Left cardiac atrium (tissue), 4 donors: ENCODE measurements at regions of chr2 and their contacts with region 1.

Region 1: GRCh38 chr2:74919827-74920226 is 38.6 kb upstream of the POLE4 start:
- DNase-seq: peak; percentile 60
- ATAC-seq: peak; percentile 55 to 67

Region 2: DNA sequence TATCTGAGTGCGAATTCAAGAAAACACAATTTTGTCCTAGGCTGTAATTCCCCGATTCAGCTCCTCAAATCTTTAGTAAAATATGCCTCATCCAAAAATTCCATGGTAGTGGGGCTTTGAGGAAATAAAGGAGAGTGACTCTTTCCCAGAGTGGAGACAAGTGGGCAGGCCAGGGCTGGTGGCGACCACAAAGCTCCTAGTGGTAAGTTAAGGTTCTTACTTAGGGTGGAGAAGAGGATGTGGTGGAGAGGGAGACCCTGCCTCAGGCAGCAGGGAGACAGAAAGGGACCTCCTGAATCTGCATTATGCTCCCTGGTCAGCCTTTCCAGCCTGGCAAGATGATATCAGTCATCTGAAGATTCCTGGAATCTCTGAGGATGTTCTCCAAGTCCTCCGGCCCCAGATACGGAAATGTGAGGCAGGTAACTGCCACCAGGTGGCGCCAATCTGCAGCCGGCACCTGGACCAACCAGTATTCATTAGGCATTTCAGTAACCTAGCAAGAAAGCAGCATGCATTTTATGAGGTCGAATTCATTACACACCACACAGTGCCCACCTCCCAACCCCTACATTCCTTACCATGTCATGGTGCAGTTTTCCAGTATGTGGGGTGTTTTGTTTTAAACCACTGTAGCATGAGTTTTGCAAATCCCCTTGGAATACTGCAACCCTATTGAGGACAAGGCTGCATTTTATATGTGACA is 145.0 kb after region 1 on chr2:
- intact Hi-C with region 1: loop called (anchors 5 to 10 kb)
- DNase-seq: peak; percentile 38
- ATAC-seq: peak; percentile 40 to 65

Region 3: DNA sequence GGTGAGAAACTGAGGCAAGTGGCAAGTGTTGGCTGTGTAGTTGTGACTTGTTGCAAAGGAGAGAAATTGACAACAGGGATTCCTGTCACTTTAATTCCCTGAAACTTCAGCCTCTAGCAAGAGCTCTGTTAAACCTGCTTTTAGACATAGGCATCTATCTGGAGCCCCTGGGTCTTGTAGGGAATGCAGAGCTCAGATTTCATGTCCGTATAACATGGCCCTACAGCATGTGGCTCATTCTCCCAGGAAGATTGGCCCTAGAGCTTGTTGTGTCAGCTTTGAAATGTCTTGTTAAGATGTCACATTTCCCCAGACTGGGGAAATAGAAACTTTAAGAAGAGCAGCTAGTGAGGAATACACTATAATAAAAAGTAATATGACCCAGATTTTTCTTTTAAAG is 154.4 kb after region 1 on chr2:
- intact Hi-C with region 1: loop called (anchors 5 to 10 kb)
- DNase-seq: no peak
- ATAC-seq: no peak

Region 4: GRCh38 chr2:75403991-75404428 is 484.2 kb after region 1 on chr2:
- intact Hi-C with region 1: loop called (anchors 2 to 10 kb)
- DNase-seq: no peak
- ATAC-seq: peak; percentile 55 to 60

Region 5: GRCh38 chr2:75608684-75609333 is 689.0 kb after region 1 on chr2:
- intact Hi-C with region 1: loop called (anchors 10 kb)
- DNase-seq: peak; percentile 41
- ATAC-seq: peak; percentile 74 to 81